ENCODE measurements at regions of chr14 and their contacts with region 1.

Region 1: GRCh38 chr14:73949744-73950734 is at the starts of genes COQ6 and FAM161B:
- DNase-seq: peak; percentile 83 to 97 (median 95)
- H3K4me3 ChIP-seq: peak within 1 kb of the TSS; percentile 64 to 99 (median 90)
- H3K27ac ChIP-seq: peak within 1 kb of the TSS; percentile 56 to 96 (median 86)
- H3K27me3 ChIP-seq: no peaks in the 10 kb centered on the region
- CTCF ChIP-seq: peak in 42 of 56 donors; percentile 9 to 65 (median 39)
- total RNA-seq, gene COQ6: 22.2 to 46.3 (median 31.9) TPM
- total RNA-seq, gene FAM161B: 15.1 to 27.2 (median 21.4) TPM

Region 2: DNA sequence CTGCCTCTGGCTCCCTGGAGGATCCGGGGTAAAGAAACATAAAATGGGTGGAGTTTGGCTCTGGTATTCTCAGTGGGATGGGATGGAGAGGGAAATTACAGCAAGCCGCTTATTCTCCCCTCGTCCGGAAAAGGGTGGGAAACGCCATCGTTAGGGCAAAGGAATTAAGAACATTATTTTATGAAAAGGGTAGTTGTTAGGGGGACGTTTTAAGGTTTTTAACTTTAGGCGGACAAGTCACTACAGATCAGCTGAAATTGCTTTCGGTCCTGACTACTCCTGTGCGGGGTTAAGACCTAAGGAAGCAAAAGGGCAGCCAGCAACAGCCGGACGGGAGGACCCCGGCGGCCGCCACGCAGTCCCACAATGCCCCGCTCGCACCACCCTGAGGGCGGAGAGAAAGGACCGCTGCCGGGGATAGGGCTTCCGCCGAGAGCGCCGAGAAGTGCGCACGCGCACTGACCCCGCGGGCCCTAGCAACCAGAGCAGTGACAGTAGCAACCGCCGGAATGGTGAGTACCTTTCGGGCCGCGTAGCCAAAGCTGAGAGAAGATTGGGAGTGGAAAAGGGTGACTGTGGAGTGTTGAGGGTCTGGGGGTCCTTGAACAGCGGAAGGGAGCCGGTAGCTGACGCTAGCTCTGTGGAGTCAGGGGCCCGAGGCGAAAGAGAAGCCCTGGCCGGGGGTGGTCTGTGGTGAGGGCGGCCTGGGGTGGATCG is 305.4 kb before region 1 on chr14 and contains the start of gene DNAL1:
- intact Hi-C with region 1: loop called in 1 of 2 experiments (anchors 10 kb)
- DNase-seq: peak; percentile 89 to 96 (median 92)
- H3K4me3 ChIP-seq: peak within 1 kb of the TSS; percentile 65 to 100 (median 87)
- H3K27ac ChIP-seq: peak within 1 kb of the TSS; percentile 44 to 95 (median 88)
- H3K27me3 ChIP-seq: no peaks in the 10 kb centered on the region
- CTCF ChIP-seq: peak in 40 of 56 donors; percentile 11 to 65 (median 38)
- total RNA-seq, gene DNAL1: 17.3 to 60.9 (median 39.3) TPM

Region 3: DNA sequence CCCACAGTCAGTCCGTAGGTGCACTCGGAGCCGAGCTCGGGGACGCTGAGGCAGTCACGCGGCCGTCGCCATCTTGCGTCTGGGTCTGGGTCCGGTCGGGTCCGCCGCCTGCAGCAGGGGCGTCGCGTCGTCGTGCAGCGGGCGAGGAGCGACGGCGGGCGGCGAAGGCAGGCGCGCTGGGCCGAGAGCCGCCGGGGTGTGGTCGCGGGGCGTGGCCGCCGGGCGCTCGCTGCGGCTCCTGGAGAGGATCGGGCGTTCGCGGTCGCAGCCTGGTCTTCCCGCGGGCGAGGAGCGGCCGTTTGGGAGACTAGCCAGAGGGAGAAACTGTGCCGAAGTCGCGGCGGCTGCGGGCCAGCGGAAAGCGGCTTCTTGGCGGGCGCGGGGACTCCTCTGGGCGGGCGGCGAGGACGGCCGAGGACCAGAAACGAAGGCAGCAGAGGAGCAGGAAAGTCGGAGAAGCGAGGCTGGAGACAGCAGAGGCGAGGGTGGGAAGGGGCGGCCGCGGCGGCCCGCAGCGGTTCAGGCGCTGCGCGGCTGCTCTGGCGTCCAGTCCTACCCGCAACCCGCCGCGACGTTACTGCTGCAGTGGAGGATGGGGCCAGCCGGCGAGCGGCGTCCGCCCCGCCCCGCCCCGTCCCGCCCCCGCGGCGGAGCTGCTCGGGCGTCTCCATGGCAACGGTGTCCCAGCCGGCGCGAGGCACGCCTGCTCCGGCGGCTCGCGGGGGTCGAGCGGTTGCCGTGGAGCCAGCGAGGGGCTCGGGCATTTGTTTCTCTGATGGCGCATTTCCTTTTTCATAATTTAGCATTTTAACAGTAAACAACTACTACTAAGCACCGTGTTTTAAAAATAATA is 236.0 kb before region 1 on chr14 and contains the start of gene PNMA1:
- intact Hi-C with region 1: loop called in 1 of 2 experiments (anchors 5 kb)
- DNase-seq: peak; percentile 76 to 96 (median 90)
- H3K4me3 ChIP-seq: peak within 1 kb of the TSS; percentile 66 to 97 (median 88)
- H3K27ac ChIP-seq: peak within 1 kb of the TSS; percentile 82 to 100 (median 97)
- H3K27me3 ChIP-seq: no peaks in the 10 kb centered on the region
- CTCF ChIP-seq: peak in 6 of 56 donors; percentile 5 to 36 (median 15)
- total RNA-seq, gene PNMA1: 87.5 to 250 (median 176) TPM

Region 4: DNA sequence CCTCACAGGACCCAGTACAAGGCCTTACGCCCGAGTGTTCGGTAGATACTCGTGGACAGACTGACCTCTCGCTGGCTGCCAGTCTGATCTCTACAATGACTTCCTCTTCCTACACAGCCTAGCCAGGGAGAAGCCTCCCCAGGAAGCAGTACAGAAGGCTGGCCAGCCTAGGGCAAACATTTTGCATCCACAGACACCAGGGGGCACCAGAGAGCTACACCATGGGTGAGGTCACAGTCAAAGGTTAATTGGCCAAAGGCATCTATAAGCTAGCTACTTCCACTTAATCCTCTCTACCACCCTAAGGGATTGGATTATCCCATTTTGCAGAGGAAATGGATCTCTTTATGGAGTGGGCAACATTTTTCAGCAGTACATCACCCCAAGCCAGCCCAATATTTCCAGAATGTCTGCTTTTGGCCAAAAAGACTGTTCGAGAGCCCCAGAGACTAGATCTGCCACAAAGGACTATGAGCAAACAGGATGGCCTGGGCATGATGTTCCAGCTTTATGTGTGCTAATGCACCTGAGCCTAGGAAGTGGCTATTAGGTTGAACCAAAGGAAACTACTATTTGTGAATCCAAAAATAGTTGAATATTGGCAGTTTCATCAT is 221.2 kb before region 1 on chr14:
- intact Hi-C with region 1: loop called in 1 of 2 experiments (anchors 5 kb)
- DNase-seq: peak in 8 of 10 donors; percentile 76 to 88 (median 82)
- H3K4me3 ChIP-seq: peak overlapping the region in 1 of 59 donors; percentile 4
- H3K27ac ChIP-seq: peak overlapping the region in 49 of 59 donors; percentile 0 to 74 (median 45)
- H3K27me3 ChIP-seq: no peaks in the 10 kb centered on the region
- CTCF ChIP-seq: peak; percentile 88 to 99 (median 96)

Region 5: GRCh38 chr14:73741386-73741875 is 208.6 kb before region 1 on chr14:
- intact Hi-C with region 1: loop called in 1 of 2 experiments (anchors 10 kb)
- DNase-seq: peak in 4 of 10 donors; percentile 61 to 77 (median 64)
- H3K4me3 ChIP-seq: peak overlapping the region in 57 of 59 donors; percentile 4 to 61 (median 36)
- H3K27ac ChIP-seq: peak overlapping the region; percentile 42 to 95 (median 83)
- H3K27me3 ChIP-seq: no peaks in the 10 kb centered on the region
- CTCF ChIP-seq: no peak

Region 6: DNA sequence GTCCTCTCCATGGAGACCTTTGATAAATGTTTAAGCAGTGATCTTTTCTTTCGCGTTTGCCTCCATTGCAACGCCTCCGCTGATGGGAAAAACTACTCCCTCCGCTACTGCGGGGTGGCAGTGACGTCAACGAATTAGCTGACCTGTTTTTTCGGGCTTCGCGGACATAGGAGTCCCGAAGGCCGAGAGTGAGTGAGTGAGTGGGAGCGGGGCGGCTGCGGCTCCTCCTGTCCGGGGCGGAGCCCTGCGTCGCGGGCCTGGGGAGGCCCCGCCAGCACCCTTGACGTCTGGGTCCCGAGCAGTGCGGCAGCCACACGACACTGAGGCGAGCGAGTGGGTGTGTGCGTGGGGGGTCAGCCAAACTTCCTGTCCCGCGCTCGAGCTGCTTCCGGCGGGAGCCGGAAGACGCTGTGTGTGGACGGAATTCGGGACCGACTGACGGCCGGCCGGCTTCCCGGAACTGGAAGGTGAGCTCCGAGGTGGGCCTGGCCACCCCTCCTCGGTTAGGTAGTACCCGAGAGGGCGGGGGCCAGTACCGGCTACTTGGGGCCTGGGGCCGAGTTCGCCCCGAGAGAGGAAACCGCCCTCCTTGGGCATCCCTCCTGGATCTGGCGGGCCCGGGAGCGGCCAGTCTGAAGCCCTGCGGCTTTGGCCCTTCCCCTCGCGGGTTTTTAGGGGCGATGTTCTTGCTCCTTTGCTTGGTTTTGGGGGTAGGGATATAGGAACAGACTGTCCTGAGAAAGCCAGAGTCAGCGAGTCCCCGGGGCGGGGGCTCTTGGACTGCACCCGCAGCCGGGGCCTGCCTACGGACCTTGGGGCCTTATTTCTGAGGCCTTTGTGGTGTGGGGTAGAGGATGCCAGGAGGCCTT is 63.4 kb before region 1 on chr14 and contains the start of gene ZNF410:
- intact Hi-C with region 1: loop called (anchors 2 to 5 kb)
- DNase-seq: peak; percentile 75 to 93 (median 88)
- H3K4me3 ChIP-seq: peak within 1 kb of the TSS; percentile 66 to 100 (median 91)
- H3K27ac ChIP-seq: peak within 1 kb of the TSS; percentile 52 to 98 (median 91)
- H3K27me3 ChIP-seq: no peaks in the 10 kb centered on the region
- CTCF ChIP-seq: peak in 19 of 56 donors; percentile 3 to 36 (median 11)
- total RNA-seq, gene ZNF410: 31.1 to 70.7 (median 43.5) TPM

Region 7: GRCh38 chr14:73991092-73991491 is 41.1 kb after region 1 on chr14:
- intact Hi-C with region 1: no loop called
- DNase-seq: no peak
- H3K4me3 ChIP-seq: no peak overlapping the region
- H3K27ac ChIP-seq: no peak overlapping the region
- H3K27me3 ChIP-seq: no peaks in the 10 kb centered on the region
- CTCF ChIP-seq: no peak

Region 8: DNA sequence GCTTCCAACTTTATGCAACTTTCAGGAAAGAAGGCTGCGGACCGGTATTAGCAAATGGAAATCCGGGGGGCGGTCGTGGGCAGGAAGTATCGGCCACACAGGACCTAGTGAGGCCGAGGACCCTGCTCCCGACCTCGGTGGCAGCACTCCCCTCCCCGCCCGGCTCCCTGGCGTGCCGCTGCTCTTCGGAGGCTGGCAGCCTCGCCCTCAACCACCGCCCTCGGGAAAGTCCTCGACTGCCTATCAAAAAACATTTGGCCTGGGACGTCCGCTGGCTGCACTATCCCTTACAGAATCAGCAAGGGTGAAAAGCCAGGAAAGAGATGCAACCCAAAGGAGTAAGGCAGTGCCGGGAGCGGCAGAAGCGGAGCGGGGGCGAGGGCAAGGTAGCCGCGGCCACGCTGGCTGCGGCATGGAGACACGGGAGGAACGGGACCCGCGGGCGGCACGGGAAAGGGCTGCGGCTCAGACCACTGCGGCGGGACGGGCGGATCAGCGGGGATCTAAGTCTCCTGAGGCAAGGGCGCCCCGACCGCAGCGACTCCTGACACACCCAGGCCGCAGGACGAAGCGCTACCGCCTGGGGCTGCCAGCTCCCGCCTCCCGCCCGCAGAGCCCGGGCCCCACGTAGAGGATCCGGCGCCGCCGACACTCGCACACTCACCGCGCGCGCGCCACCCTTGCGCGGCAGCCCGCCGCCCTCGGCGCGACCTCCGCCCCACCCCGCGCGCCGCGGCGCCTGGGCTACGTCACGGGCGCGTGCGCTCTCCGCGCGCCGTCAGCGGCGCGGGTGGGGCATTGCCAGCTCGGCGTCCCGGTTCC is 68.8 kb after region 1 on chr14 and contains the starts of genes BBOF1 and ENTPD5:
- intact Hi-C with region 1: loop called in 1 of 2 experiments (anchors 2 kb)
- DNase-seq: peak; percentile 73 to 94 (median 83)
- H3K4me3 ChIP-seq: peak within 1 kb of the TSS; percentile 66 to 98 (median 92)
- H3K27ac ChIP-seq: peak within 1 kb of the TSS; percentile 59 to 98 (median 90)
- H3K27me3 ChIP-seq: no peaks in the 10 kb centered on the region
- CTCF ChIP-seq: peak in 18 of 56 donors; percentile 4 to 41 (median 19)
- total RNA-seq, gene BBOF1: 4.1 to 17.0 (median 9.4) TPM
- total RNA-seq, gene ENTPD5: 6.0 to 19.1 (median 11.0) TPM

Measured in dorsolateral prefrontal cortex (tissue), 120 donors.